ENCODE measurements at regions of chr5 and their contacts with region 1.

Region 1: DNA sequence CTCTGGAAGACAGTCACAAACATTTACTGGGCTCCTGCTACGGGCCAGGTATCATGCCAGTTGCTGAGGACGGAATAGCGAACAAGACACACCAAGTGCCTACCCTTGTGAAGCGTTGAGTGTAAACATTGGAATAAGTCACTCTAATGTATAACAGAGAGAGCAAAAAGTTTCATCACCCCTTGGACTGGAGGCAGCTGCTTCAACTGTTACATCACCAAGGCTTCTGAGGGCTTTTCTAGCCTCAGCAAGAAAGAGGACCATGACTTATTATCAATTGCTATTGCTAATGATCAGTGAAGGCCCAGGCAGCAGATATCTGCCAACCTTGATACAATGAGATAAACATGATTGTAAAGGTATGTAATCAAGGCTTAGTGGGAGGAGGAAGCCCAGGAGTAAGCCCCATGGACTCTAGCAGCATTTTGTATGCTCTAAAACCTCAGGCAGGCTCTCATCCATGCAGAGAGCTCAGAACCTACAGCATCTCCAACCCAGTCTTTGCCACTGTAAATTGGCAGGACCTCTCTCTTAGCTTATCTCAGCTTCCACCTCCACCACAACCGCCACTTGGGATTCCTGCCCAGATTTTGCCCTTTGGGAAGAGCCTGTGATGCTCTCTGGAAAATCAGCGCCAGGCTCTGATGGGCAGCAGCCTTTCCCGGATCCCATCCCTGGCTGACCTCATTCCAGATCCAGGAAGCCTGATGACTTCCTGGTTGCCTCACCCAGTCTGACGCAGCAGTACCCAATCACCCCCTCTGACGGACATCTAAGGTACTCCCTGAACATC is 54.5 kb downstream of the ADAM19 start:
- DNase-seq: peak; percentile 32 to 60
- ATAC-seq: peak; percentile 38 to 90 (median 64)
- H3K4me3 ChIP-seq: no peak overlapping the region
- H3K27ac ChIP-seq: peak overlapping the region in 8 of 10 donors; percentile 31 to 72 (median 53)
- H3K4me1 ChIP-seq: peaks cover 5 to 57% (median 30%) of the 10 kb centered on the region in 9 donors
- H3K27me3 ChIP-seq: no peaks in the 10 kb centered on the region
- CTCF ChIP-seq: peak in 3 of 9 donors; percentile 34 to 46 (median 38)

Region 2: GRCh38 chr5:157558041-157558595 is 37.0 kb after region 1 on chr5:
- intact Hi-C with region 1: loop called in 4 of 10 experiments (anchors 5 to 10 kb)
- DNase-seq: no peak
- ATAC-seq: no peak
- H3K4me3 ChIP-seq: no peak overlapping the region
- H3K27ac ChIP-seq: peak overlapping the region in 6 of 10 donors; percentile 23 to 85 (median 66)
- H3K4me1 ChIP-seq: peaks cover 19 to 96% (median 83%) of the 10 kb centered on the region in 9 donors
- H3K27me3 ChIP-seq: no peaks in the 10 kb centered on the region
- CTCF ChIP-seq: no peak

Region 3: DNA sequence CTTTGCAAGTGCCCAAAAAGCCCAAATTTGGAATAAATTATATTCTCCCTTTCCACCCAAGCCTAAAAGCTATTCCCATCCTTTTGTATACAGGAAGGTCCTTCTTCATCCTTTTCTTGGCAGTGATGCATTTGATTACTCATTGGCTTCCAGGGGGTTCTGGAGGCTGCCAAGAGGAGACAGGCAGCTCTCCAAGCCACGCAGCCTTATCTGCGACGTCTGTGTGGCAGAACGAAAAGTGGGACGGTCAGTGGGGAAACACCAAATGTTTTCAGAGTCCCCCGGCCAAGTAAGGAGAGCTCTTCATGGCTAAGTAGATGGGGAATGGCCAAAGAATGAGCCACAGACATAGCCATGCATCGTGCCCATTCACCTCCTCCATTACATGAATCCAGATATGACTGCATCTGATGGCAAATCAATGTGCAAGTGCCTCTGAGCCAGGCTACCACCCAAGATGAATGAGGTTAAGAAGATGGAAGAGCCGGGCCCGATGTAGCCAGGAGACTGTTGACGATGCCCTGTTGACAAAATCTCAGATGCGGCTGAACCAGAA is 42.3 kb after region 1 on chr5:
- intact Hi-C with region 1: loop called in 4 of 10 experiments (anchors 5 to 10 kb)
- DNase-seq: peak in 1 of 2 donors; percentile 57
- ATAC-seq: peak in 7 of 8 donors; percentile 6 to 75 (median 36)
- H3K4me3 ChIP-seq: peak overlapping the region in 4 of 10 donors; percentile 6 to 19 (median 9)
- H3K27ac ChIP-seq: peak overlapping the region in 9 of 10 donors; percentile 43 to 89 (median 78)
- H3K4me1 ChIP-seq: peaks cover 32 to 99% (median 70%) of the 10 kb centered on the region in 9 donors
- H3K27me3 ChIP-seq: no peaks in the 10 kb centered on the region
- CTCF ChIP-seq: no peak

Measured in heart right ventricle (tissue), 16 donors.